IMR-90 (cell line): ENCODE measurements at regions of chr15 and their contacts with region 1.

Region 1: GRCh38 chr15:31049682-31050615 is 51.6 kb downstream of the TRPM1 start:
- DNase-seq: no peak
- ATAC-seq: no peak
- H3K4me3 ChIP-seq: no peak overlapping the region
- H3K27ac ChIP-seq: no peak overlapping the region
- H3K4me1 ChIP-seq: no peaks in the 10 kb centered on the region
- H3K27me3 ChIP-seq: peaks cover 1% of the 10 kb centered on the region; the same call in 1 of the 2 replicates
- CTCF ChIP-seq: no peak
- POLR2A ChIP-seq: no peak
- RAD21 ChIP-seq: no peak

Region 2: DNA sequence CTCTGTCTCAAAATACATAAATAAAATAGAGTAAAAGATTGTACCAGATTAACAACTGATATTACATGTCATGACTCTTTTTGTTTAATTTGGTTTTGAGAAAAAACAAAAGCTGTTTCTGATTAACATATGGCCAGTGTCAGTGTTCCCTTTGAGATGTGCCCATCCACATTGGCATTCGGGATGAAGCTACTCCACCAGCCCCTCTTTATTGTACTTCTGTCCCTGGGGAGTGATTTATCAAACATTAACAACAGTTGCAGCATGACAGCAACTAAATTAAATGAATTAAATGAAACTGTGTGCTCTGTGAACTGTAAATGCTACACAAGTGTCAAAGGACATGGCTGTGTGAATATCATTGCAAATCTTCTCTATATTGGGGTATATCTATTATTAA is 32.6 kb before region 1 on chr15:
- CTCF ChIA-PET with region 1: interaction called, 10 read pairs
- POLR2A ChIA-PET with region 1: no interaction called
- dilution Hi-C with region 1: no loop called
- in situ Hi-C with region 1: no loop called
- intact Hi-C with region 1: no loop called
- DNase-seq: no peak
- ATAC-seq: no peak
- H3K4me3 ChIP-seq: no peak overlapping the region
- H3K27ac ChIP-seq: no peak overlapping the region
- H3K4me1 ChIP-seq: peaks cover 5% of the 10 kb centered on the region; the same call in 1 of the 2 replicates
- H3K27me3 ChIP-seq: no peaks in the 10 kb centered on the region
- CTCF ChIP-seq: no peak
- POLR2A ChIP-seq: no peak
- RAD21 ChIP-seq: no peak